Ovary (tissue), 10 donors: ENCODE measurements at regions of chr20 and their contacts with region 1.

Region 1: GRCh38 chr20:62065669-62066338 is at the start of gene TAF4:
- DNase-seq: peak; percentile 72 to 88 (median 80)
- H3K4me3 ChIP-seq: peak within 1 kb of the TSS; percentile 65
- H3K27ac ChIP-seq: peak within 1 kb of the TSS; percentile 80 to 90
- H3K4me1 ChIP-seq: peaks cover 21% of the 10 kb centered on the region
- H3K27me3 ChIP-seq: no peaks in the 10 kb centered on the region
- CTCF ChIP-seq: no peak
- EP300 ChIP-seq: no peak
- POLR2A ChIP-seq: peak; percentile 60
- total RNA-seq, gene TAF4: 15.6 to 34.7 (median 28.1) TPM

Region 2: GRCh38 chr20:61621035-61621730 is 444.6 kb before region 1 on chr20:
- intact Hi-C with region 1: no loop called
- DNase-seq: no peak
- H3K4me3 ChIP-seq: no peak overlapping the region
- H3K27ac ChIP-seq: no peak overlapping the region
- H3K4me1 ChIP-seq: peaks cover 2% of the 10 kb centered on the region
- H3K27me3 ChIP-seq: no peaks in the 10 kb centered on the region
- CTCF ChIP-seq: no peak
- EP300 ChIP-seq: no peak
- POLR2A ChIP-seq: no peak

Region 3: DNA sequence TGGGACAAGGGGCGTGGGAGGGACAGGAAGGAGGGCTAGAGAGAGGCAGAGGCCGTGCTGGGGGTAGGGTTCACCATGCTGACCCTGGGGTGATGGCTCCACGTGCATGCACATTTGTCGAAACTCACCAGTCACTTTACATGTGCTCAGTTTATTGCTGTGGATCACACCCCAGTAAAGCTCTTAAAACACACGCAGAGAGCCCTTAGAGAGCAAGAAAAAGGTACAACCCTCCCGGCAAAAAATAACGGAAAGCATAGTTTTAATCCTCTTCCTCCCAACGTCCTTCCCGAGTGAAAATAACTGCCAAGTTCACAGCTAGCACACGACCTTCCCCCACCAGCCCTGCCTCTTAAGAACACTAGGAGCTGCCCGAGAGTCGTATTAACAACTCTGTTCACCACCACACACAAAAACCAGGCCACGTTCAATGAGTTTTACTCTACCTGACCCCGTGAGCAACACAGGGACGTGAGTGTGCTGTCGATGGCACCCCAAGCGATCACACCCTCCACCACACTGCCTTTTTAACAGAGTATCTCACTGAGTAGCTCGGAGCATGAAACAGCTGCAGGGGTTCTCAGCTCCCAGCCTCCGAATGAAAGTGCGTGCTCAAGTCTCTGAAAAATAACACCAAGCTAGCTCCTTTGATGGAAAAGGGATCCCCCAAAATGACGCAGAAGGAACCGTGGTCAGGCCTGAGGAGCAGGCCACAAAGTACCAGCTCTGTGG is 39.8 kb before region 1 on chr20:
- intact Hi-C with region 1: loop called in 2 of 4 experiments (anchors 5 kb)
- DNase-seq: peak in 4 of 5 donors; percentile 59 to 71 (median 62)
- H3K4me3 ChIP-seq: no peak overlapping the region
- H3K27ac ChIP-seq: peak overlapping the region in 1 of 2 donors; percentile 57
- H3K4me1 ChIP-seq: peaks cover 20% of the 10 kb centered on the region
- H3K27me3 ChIP-seq: no peaks in the 10 kb centered on the region
- CTCF ChIP-seq: peak; percentile 47 to 64 (median 59)
- EP300 ChIP-seq: no peak
- POLR2A ChIP-seq: no peak

Region 4: DNA sequence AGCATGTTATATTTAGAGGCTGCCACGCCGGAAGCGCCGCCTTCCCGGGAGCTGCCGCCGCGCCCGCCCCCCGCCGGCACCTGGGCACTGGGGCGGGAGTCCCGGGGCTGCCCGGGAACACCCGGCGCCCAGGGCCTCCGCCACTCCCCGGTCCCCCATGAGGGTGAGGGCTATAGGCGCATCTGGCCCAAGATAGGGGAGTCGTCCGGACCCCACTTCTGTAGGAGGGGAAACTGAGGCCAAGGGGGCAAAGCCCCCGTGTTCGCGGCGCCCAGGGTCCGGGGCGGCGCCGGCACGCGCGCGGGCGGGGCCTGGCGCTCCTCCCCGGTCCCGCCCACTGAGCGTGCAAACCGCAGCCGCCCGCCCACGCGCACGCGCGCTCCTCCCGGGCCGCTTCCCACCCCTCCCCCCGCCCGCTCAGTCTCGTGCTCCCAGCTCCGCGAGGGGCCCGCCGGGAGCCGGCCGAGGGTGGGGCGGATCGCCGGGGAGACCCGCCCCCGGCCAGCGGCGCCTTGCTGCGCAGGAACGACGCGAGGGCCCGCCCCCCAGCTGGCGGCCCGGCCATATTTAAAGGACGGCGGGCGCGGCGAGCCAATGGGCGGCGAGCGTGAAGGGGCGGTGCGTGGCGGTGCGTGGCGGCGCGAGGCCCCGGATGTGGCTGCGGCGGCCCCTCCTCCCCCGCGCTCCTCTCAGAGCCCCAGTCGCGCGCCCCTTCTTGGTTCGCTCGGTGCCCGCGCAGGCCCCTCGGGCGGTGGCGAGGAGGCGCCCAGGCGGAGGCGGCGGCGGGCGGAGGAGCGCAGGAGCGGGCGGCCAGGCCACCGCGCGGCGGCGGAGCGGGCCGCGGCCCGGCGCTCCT is 56.2 kb after region 1 on chr20 and contains the start of gene LSM14B:
- intact Hi-C with region 1: loop called in 1 of 4 experiments (anchors 1 kb)
- DNase-seq: peak; percentile 96 to 98 (median 96)
- H3K4me3 ChIP-seq: peak within 1 kb of the TSS; percentile 84
- H3K27ac ChIP-seq: peak within 1 kb of the TSS; percentile 90 to 96
- H3K4me1 ChIP-seq: peaks cover 6% of the 10 kb centered on the region
- H3K27me3 ChIP-seq: no peaks in the 10 kb centered on the region
- CTCF ChIP-seq: no peak
- EP300 ChIP-seq: no peak
- POLR2A ChIP-seq: peak; percentile 45
- total RNA-seq, gene LSM14B: 21.5 to 62.2 (median 56.1) TPM

Region 5: DNA sequence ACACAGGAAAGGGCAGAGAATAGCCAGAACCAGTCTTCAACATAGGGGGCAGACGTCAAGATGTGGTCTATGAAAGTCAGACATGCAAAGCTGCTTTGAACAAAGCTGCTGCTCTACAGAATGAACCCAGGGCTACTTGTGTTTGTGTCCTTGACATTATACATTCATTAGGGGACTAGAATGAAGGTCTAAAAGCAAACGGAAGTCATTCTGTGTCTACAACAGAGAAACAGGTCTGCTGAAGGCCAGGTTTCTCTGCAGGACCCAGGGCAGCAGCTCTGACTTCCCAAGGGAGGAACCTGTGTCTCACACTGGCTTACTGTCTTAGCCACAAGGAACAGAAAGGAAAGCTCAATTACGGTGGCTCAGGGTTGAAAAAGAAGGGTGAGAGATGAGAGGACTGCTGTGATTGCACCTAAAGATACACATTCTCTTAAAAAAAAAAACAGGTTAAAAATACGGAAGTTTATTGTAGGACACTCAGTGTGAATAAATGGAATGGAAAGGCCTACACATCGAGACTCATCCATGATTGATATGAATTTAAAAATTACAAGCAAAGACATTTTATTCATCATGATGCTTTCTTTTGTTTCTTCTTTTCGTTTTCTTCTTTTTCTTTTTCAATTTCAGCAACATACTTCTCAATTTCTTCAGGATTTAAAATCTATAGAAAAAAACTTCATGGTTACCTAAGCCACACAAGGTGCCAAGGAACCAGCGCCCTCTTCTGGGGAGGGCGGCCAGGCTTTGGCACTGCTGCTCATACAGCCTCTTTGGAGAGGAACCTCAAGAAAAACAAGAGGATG is 70.7 kb after region 1 on chr20:
- intact Hi-C with region 1: loop called in 3 of 4 experiments (anchors 5 kb)
- DNase-seq: peak; percentile 44 to 77 (median 71)
- H3K4me3 ChIP-seq: no peak overlapping the region
- H3K27ac ChIP-seq: no peak overlapping the region
- H3K4me1 ChIP-seq: peaks cover 4% of the 10 kb centered on the region
- H3K27me3 ChIP-seq: no peaks in the 10 kb centered on the region
- CTCF ChIP-seq: peak; percentile 26 to 57 (median 49)
- EP300 ChIP-seq: no peak
- POLR2A ChIP-seq: no peak

Region 6: DNA sequence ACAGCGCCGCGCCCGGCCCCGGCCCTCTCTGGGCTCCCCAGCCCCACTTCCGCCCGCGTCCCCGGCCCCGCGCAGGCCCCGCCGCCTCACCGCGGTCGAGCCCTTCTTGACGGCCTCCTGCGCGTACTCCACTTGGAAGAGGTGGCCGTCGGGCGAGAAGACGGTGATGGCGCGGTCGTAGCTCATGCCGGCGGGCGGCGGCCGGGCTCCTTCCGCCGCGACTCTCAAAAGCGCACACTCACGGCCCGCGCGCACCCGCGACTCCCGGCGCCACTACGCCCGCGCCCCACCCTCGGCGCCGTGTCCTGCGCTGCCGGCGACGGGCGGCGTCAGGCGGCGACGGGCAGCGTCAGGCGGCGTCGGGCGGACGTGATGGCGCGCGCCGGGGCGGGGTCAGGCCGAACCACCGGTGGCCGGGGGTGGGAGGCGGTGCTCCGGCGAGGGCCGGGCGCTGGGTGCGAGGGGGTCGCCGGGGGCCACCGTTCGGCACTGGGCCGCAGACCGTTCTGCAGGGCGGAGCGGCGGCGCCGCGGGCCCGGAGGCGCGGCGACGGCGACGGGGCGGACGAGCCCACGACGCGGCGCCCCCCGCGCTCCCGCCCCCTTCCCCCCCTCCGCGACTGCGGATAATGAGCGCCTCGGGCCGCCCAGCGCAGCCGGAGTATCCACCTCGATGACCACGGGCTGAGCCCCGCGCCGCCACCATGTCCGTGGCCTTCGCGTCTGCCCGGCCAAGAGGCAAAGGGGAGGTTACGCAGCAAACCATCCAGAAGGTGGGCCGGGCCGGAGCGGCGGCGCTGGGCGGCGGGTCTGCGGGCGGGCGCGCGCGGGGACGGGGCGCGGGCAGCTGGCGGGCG is 77.5 kb after region 1 on chr20 and contains the starts of genes PSMA7 and SS18L1:
- intact Hi-C with region 1: loop called in 1 of 4 experiments (anchors 5 kb)
- DNase-seq: peak; percentile 83 to 90 (median 86)
- H3K4me3 ChIP-seq: peak within 1 kb of the TSS; percentile 68
- H3K27ac ChIP-seq: peak within 1 kb of the TSS; percentile 98 to 100
- H3K4me1 ChIP-seq: peaks cover 14% of the 10 kb centered on the region
- H3K27me3 ChIP-seq: no peaks in the 10 kb centered on the region
- CTCF ChIP-seq: no peak
- EP300 ChIP-seq: no peak
- POLR2A ChIP-seq: peak; percentile 88
- total RNA-seq, gene PSMA7: 163 to 214 (median 168) TPM
- total RNA-seq, gene SS18L1: 9.5 to 14.3 (median 12.4) TPM

Region 7: DNA sequence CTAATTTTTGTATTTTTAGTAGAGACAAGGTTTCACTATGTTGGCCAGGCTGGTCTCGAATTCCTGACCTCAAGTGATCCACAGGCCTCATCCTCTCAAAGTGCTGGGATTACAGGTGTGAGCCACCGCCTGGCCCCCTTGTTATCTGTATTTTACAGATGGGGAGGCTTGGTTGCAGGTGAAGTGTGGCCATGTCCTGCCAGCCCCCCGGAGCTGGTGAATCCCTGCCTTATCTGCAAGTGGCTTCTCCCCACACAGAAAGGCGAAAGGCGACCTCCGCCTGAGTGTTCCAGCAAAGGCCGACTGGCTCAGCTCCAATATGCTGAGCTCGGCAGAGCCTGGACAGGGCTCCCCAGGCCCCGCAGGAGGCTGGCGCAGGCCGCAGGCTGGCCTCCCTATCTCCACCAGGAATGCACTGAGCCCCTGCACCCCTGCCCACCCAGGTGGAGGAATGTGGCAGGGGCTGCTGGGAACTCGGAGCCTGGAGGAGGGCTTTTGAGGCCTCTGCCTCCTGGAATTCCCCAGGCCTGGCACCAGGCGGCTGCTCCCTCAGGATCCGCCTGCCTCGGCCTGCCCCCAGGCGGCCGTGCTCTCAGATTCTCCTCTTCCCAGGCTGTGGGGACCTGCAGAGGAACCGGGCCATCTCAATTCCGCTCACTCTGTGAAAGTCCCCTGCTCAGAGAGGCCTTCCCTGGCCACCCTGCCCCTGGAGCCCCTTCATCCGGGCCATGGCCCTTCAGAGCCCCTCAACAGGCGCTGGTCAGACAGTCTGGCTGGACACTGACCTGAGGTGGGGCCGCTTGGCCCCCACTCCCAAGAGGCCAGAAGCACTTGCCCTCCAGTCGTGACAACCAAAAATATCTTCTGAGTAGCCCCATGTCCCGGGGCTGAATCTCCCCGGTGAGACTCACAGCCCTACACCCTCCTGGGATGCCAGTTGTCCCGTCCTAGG is 310.6 kb after region 1 on chr20:
- intact Hi-C with region 1: loop called in 1 of 4 experiments (anchors 10 kb)
- DNase-seq: peak in 4 of 5 donors; percentile 63 to 78 (median 66)
- H3K4me3 ChIP-seq: no peak overlapping the region
- H3K27ac ChIP-seq: no peak overlapping the region
- H3K4me1 ChIP-seq: peaks cover 17% of the 10 kb centered on the region
- H3K27me3 ChIP-seq: no peaks in the 10 kb centered on the region
- CTCF ChIP-seq: peak; percentile 20 to 40 (median 34)
- EP300 ChIP-seq: no peak
- POLR2A ChIP-seq: no peak